Aorta (tissue), 5 donors: ENCODE measurements at regions of chr9 and their contacts with region 1.

Region 1: GRCh38 chr9:84697509-84698114 is 28.1 kb downstream of the NTRK2 start:
- DNase-seq: peak; percentile 75 to 92
- ATAC-seq: peak; percentile 76
- H3K4me3 ChIP-seq: no peak overlapping the region
- H3K27ac ChIP-seq: no peak overlapping the region
- H3K4me1 ChIP-seq: no peaks in the 10 kb centered on the region
- H3K27me3 ChIP-seq: no peaks in the 10 kb centered on the region

Region 2: GRCh38 chr9:84736081-84736480 is 38.5 kb after region 1 on chr9:
- intact Hi-C with region 1: no loop called
- DNase-seq: no peak
- ATAC-seq: no peak
- H3K4me3 ChIP-seq: no peak overlapping the region
- H3K27ac ChIP-seq: no peak overlapping the region
- H3K4me1 ChIP-seq: no peaks in the 10 kb centered on the region
- H3K27me3 ChIP-seq: no peaks in the 10 kb centered on the region

Region 3: DNA sequence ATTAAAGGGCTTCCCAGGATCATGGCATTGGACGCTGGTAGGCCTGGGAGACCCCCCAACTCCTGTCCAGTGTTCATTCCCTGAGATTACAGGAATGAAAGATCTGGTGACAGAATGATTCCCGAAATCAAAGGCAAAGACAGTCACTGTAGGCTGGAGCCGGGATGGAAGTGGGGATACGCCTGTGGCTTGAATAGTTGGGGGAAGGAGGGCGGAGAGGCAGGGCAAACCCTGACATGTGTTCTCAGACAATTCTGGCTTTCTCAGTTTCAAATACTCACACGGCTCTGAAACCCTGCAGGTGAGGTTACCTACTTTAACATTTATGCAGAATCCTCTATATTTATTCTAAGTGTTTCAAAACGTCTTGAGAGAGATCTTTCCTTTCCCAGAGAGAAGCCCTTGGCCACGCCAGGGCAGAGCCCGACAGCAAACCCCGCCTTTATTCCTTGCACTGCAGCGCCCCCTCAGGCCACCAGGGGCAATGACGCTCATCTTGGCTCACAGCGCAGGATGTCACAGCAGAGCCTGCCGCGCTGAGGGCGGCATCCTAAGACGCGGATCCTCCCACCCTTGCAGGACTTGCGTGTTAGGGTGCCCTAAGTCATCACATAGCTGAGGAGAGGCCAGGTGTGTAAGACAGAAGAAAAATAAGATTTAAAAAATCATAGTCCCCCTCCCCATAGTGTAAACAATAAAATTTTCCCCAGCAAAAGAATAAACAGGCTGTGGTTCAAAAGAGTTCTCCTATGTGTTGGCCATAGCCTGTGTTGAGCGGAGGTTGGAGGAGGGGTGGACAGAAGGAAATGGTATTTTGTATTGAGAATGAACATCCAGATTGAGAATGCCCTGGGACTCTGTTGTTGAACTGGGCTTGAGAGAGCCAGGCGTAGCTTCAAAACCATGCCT is 256.4 kb after region 1 on chr9:
- intact Hi-C with region 1: loop called (anchors 2 kb)
- DNase-seq: peak; percentile 77 to 95
- ATAC-seq: peak; percentile 92
- H3K4me3 ChIP-seq: no peak overlapping the region
- H3K27ac ChIP-seq: no peak overlapping the region
- H3K4me1 ChIP-seq: no peaks in the 10 kb centered on the region
- H3K27me3 ChIP-seq: no peaks in the 10 kb centered on the region

Region 4: GRCh38 chr9:85258823-85259370 is 561.3 kb after region 1 on chr9:
- intact Hi-C with region 1: loop called (anchors 10 kb)
- DNase-seq: peak; percentile 65 to 80
- ATAC-seq: peak; percentile 87
- H3K4me3 ChIP-seq: no peak overlapping the region
- H3K27ac ChIP-seq: no peak overlapping the region
- H3K4me1 ChIP-seq: no peaks in the 10 kb centered on the region
- H3K27me3 ChIP-seq: no peaks in the 10 kb centered on the region